CD8-positive, alpha-beta memory T cell (primary cell): ENCODE measurements at regions of chr21 and their contacts with region 1.

Region 1: GRCh38 chr21:25607151-25608043 is at the start of gene MRPL39:
- DNase-seq: peak; percentile 74 to 91 (median 79)
- H3K4me3 ChIP-seq: peak within 1 kb of the TSS; percentile 68
- H3K4me3 Mint-ChIP-seq: peak within 1 kb of the TSS; percentile 95 to 100 (median 100)
- H3K27ac ChIP-seq: peak within 1 kb of the TSS; percentile 83
- H3K27ac Mint-ChIP-seq: peak within 1 kb of the TSS; percentile 75 to 100 (median 99)
- H3K4me1 ChIP-seq: peaks cover 11% of the 10 kb centered on the region
- H3K4me1 Mint-ChIP-seq: peaks cover 37 to 55% (median 53%) of the 10 kb centered on the region in 3 donors
- H3K27me3 ChIP-seq: no peaks in the 10 kb centered on the region
- H3K27me3 Mint-ChIP-seq: peaks cover 0 to 1% of the 10 kb centered on the region in 2 donors
- total RNA-seq, gene MRPL39: 81.1 to 85.5 TPM

Region 2: GRCh38 chr21:25639551-25640201 is 32.3 kb after region 1 on chr21:
- CTCF ChIA-PET with region 1: interaction called, 15 read pairs
- POLR2A ChIA-PET with region 1: no interaction called
- DNase-seq: peak; percentile 23 to 66 (median 40)
- H3K4me3 ChIP-seq: peak overlapping the region; percentile 53
- H3K4me3 Mint-ChIP-seq: peak overlapping the region; percentile 68 to 90 (median 84)
- H3K27ac ChIP-seq: no peak overlapping the region
- H3K27ac Mint-ChIP-seq: peak overlapping the region in 2 of 8 donors; percentile 33 to 61
- H3K4me1 ChIP-seq: peaks cover 12% of the 10 kb centered on the region
- H3K4me1 Mint-ChIP-seq: peaks cover 14 to 18% (median 18%) of the 10 kb centered on the region in 3 donors
- H3K27me3 ChIP-seq: peaks cover 4% of the 10 kb centered on the region
- H3K27me3 Mint-ChIP-seq: peaks cover 19 to 45% of the 10 kb centered on the region in 2 donors

Region 3: GRCh38 chr21:25708467-25709065 is 101.2 kb after region 1 on chr21:
- CTCF ChIA-PET with region 1: interaction called, 19 read pairs
- POLR2A ChIA-PET with region 1: no interaction called
- DNase-seq: peak; percentile 11 to 64 (median 24)
- H3K4me3 ChIP-seq: no peak overlapping the region
- H3K4me3 Mint-ChIP-seq: no peak overlapping the region
- H3K27ac ChIP-seq: no peak overlapping the region
- H3K27ac Mint-ChIP-seq: no peak overlapping the region
- H3K4me1 ChIP-seq: no peaks in the 10 kb centered on the region
- H3K4me1 Mint-ChIP-seq: no peaks in the 10 kb centered on the region
- H3K27me3 ChIP-seq: no peaks in the 10 kb centered on the region
- H3K27me3 Mint-ChIP-seq: no peaks in the 10 kb centered on the region

Region 4: DNA sequence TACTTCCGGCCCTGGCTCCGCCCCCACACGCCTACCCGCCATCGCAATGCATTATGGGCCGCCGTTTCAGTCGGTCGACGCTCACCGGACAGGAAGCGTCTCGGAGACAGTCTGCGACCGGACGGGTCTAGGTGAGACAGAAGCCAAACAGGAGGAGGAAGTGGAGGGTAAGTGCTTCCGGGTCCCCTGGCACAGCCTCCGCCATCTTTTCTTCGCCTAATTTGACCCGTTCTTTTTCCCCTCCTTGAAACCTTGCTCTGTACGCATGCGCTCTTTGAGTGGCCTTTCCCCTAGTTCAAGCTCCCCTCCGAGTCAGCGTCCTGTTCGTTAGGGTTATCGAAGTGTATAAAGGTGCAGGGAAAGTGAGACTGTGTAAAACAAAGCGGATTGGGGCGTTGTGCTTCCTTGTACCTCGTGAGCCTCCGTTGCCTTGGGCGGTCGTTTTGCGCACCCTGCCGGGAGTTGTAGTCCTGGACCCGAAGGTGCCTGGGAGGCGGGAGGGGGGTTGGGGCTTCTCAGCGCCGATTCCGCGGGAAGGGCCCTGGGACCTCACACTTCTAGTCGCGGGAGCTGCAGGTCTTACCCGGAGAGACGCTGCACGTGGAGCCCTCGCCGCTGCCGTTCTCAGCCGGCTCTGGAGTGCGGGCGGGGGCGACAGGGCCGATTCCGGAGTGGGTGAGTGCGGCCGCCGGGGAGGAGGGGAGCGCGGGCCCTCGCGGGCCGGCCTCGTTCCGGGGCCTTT is 127.7 kb after region 1 on chr21 and contains the starts of genes ATP5PF and GABPA:
- CTCF ChIA-PET with region 1: interaction called, 16 read pairs
- POLR2A ChIA-PET with region 1: interaction called, 10 read pairs
- DNase-seq: peak; percentile 96 to 98 (median 97)
- H3K4me3 ChIP-seq: peak within 1 kb of the TSS; percentile 93
- H3K4me3 Mint-ChIP-seq: peak within 1 kb of the TSS; percentile 97 to 100 (median 100)
- H3K27ac ChIP-seq: peak within 1 kb of the TSS; percentile 91
- H3K27ac Mint-ChIP-seq: peak within 1 kb of the TSS; percentile 97 to 100 (median 100)
- H3K4me1 ChIP-seq: peaks cover 17% of the 10 kb centered on the region
- H3K4me1 Mint-ChIP-seq: peaks cover 53 to 74% (median 70%) of the 10 kb centered on the region in 3 donors
- H3K27me3 ChIP-seq: no peaks in the 10 kb centered on the region
- H3K27me3 Mint-ChIP-seq: no peaks in the 10 kb centered on the region
- total RNA-seq, gene ATP5PF: 182 to 197 TPM
- total RNA-seq, gene GABPA: 25.0 to 26.8 TPM